Posterior vena cava (tissue), 2 donors: ENCODE measurements at regions of chr11 and their contacts with region 1.

Region 1: GRCh38 chr11:19903620-19904069 is 191.0 kb downstream of the NAV2 start:
- DNase-seq: peak; percentile 82

Region 2: GRCh38 chr11:19561011-19561410 is 342.6 kb before region 1 on chr11:
- intact Hi-C with region 1: loop called (anchors 1 to 5 kb)
- DNase-seq: no peak